Activated CD4-positive, alpha-beta T cell treated with anti-CD3 and anti-CD28 coated beads for 36 hours (primary cell): ENCODE measurements at regions of chr1 and their contacts with region 1.

Region 1: GRCh38 chr1:109773146-109773899 is 9.6 kb upstream of the EPS8L3 start:
- DNase-seq: peak; percentile 85
- ATAC-seq: peak; percentile 88
- H3K4me3 Mint-ChIP-seq: no peak overlapping the region
- H3K27ac Mint-ChIP-seq: no peak overlapping the region
- H3K4me1 Mint-ChIP-seq: no peaks in the 10 kb centered on the region
- H3K27me3 Mint-ChIP-seq: no peaks in the 10 kb centered on the region

Region 2: DNA sequence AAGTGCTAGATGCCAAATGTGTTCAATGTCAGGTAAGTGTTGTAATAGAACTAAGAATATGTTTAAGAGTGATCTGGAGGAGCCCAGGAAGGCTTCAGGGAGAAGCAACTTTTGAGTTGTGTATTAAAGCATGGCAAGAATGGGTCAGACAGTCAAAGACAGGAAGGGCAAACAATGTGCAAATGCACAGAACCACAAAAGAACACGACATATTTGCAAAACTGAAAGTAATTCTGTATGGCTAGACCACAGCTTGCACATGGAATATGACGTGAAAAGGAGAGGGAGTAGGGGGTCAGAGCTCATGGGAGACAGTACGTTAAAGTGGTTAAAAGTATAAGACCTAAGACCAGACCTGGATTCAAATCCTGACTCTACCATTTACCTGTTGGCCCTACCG is 368.5 kb before region 1 on chr1:
- CTCF ChIA-PET with region 1: no interaction called
- POLR2A ChIA-PET with region 1: no interaction called
- intact Hi-C with region 1: no loop called
- DNase-seq: no peak
- ATAC-seq: peak; percentile 82
- H3K4me3 Mint-ChIP-seq: no peak overlapping the region
- H3K27ac Mint-ChIP-seq: peak overlapping the region; percentile 83
- H3K4me1 Mint-ChIP-seq: peaks cover 20% of the 10 kb centered on the region
- H3K27me3 Mint-ChIP-seq: no peaks in the 10 kb centered on the region

Region 3: DNA sequence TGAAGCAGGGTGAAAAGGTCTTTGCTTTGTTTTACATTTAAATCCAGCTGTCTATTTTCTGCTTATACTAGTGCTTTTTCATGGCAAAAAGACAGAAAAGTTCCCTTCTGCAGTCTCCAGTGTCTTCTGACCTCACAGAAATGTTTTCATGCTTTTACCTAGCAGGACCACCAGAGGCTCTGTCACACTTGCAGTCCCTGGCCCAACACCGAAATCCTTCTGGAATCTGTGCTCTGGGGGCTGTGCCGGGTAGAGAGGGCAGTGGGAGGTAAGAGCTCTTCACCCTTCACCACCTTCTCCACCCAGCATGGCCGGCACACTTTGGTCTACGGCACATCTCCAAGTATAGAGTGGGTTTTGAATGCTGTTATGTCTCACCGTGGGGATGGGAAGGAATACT is 174.7 kb before region 1 on chr1:
- CTCF ChIA-PET with region 1: no interaction called
- POLR2A ChIA-PET with region 1: no interaction called
- intact Hi-C with region 1: no loop called
- DNase-seq: no peak
- ATAC-seq: no peak
- H3K4me3 Mint-ChIP-seq: no peak overlapping the region
- H3K27ac Mint-ChIP-seq: no peak overlapping the region
- H3K4me1 Mint-ChIP-seq: peaks cover 21% of the 10 kb centered on the region
- H3K27me3 Mint-ChIP-seq: no peaks in the 10 kb centered on the region

Region 4: GRCh38 chr1:109649491-109649914 is 123.8 kb before region 1 on chr1:
- CTCF ChIA-PET with region 1: interaction called, 37 read pairs
- POLR2A ChIA-PET with region 1: no interaction called
- intact Hi-C with region 1: no loop called
- DNase-seq: no peak
- ATAC-seq: no peak
- H3K4me3 Mint-ChIP-seq: no peak overlapping the region
- H3K27ac Mint-ChIP-seq: no peak overlapping the region
- H3K4me1 Mint-ChIP-seq: no peaks in the 10 kb centered on the region
- H3K27me3 Mint-ChIP-seq: peaks cover 3% of the 10 kb centered on the region

Region 5: DNA sequence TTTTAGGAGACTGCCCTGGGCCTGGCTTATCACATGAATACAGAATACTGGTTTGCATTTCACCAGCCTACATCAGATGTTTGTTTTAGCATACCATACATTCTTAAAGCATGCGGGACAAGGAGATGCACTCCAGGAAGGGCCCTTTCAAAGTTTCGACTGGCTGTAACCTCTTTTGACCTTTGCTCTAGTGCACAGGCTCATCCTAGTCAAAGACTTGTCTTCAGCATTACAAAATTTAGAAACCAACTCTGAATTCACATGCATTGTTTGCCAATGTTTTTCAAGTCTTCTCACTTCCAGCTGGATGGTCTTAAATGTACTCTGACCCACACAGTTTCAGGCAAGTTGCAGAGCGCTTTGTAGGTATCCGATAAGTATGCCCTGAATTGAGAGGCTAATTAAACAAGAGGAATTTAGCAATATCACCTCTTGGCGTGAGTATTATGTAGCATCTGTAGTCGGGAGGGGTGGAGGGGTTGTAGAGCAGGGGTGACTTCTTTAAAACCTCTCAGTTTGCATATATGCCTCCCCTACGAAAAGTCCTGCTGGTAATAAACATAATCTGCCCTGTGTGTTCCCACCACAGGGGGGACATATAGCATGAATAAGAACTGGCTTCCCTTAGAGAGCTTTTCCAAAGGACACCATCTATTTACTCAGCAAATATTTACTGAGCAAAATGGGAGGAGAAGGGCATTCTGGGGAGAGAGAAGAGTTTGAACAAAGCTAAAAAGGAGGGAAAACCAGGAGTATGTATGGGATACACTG is 186.8 kb after region 1 on chr1:
- CTCF ChIA-PET with region 1: interaction called, 10 read pairs
- POLR2A ChIA-PET with region 1: no interaction called
- intact Hi-C with region 1: no loop called
- DNase-seq: no peak
- ATAC-seq: no peak
- H3K4me3 Mint-ChIP-seq: no peak overlapping the region
- H3K27ac Mint-ChIP-seq: no peak overlapping the region
- H3K4me1 Mint-ChIP-seq: no peaks in the 10 kb centered on the region
- H3K27me3 Mint-ChIP-seq: peaks cover 2% of the 10 kb centered on the region

Region 6: GRCh38 chr1:110011527-110012041 is 238.3 kb after region 1 on chr1:
- CTCF ChIA-PET with region 1: interaction called, 9 read pairs
- POLR2A ChIA-PET with region 1: no interaction called
- intact Hi-C with region 1: loop called (anchors 1 kb)
- DNase-seq: peak; percentile 41
- ATAC-seq: peak; percentile 95
- H3K4me3 Mint-ChIP-seq: no peak overlapping the region
- H3K27ac Mint-ChIP-seq: no peak overlapping the region
- H3K4me1 Mint-ChIP-seq: no peaks in the 10 kb centered on the region
- H3K27me3 Mint-ChIP-seq: no peaks in the 10 kb centered on the region